PC-9 (cell line): ENCODE measurements at regions of chr22 and their contacts with region 1.

Region 1: DNA sequence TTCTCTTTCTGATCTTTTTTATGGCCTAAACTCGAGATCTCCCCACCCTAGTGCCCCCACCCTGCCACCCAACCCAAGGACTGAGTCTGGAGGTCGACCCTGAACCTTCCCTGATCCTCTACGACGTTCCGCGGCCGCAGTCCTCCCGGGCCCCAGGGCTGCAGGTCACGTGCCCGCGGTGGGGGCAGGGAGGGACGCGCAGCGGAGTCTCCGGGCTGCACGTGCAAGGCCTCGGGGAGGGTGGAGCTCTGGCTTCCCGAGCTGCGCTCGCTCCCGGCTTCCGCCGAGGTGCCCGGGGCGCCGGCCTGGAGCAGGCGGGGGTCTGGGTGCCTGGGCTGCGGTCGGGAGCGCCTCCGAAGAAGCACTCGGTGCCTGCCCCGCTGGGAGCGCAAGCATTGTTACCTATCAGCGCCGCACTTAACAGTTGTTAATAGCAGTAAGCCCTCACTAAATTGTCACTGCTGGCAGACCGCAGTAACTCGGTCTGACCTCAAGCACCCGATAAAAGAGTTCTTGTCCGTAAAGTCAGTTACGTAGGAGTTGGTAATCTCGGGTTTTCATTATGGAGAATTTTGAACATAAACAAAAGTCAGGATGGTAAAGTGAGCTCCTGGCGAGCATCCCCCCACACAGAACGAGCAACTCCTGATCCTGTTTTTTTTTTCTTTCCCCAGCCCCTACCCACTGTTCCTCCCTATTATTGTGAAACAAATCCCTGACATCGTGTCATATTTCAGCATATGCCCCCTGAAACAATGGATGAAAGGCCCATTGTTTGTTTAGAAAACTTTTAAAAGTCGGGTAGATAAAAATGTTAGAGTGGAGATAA is 69.7 kb upstream of the EP300 start:
- DNase-seq: peak; percentile 68 to 92
- H3K4me3 ChIP-seq: peak overlapping the region; percentile 69
- H3K27ac ChIP-seq: peak overlapping the region; percentile 95
- H3K4me1 ChIP-seq: peaks cover 15% of the 10 kb centered on the region
- H3K27me3 ChIP-seq: no peaks in the 10 kb centered on the region
- CTCF ChIP-seq: no peak

Region 2: GRCh38 chr22:40950962-40951794 is 71.5 kb before region 1 on chr22 and contains the start of gene RBX1:
- CTCF ChIA-PET with region 1: no interaction called
- POLR2A ChIA-PET with region 1: interaction called, 12 read pairs
- intact Hi-C with region 1: loop called (anchors 1 kb)
- DNase-seq: peak; percentile 91 to 98
- H3K4me3 ChIP-seq: peak within 1 kb of the TSS; percentile 83
- H3K27ac ChIP-seq: peak within 1 kb of the TSS; percentile 75
- H3K4me1 ChIP-seq: peaks cover 14% of the 10 kb centered on the region
- H3K27me3 ChIP-seq: no peaks in the 10 kb centered on the region
- CTCF ChIP-seq: no peak
- total RNA-seq, gene RBX1: 52.9 and 53.3 TPM in 2 replicates

Region 3: DNA sequence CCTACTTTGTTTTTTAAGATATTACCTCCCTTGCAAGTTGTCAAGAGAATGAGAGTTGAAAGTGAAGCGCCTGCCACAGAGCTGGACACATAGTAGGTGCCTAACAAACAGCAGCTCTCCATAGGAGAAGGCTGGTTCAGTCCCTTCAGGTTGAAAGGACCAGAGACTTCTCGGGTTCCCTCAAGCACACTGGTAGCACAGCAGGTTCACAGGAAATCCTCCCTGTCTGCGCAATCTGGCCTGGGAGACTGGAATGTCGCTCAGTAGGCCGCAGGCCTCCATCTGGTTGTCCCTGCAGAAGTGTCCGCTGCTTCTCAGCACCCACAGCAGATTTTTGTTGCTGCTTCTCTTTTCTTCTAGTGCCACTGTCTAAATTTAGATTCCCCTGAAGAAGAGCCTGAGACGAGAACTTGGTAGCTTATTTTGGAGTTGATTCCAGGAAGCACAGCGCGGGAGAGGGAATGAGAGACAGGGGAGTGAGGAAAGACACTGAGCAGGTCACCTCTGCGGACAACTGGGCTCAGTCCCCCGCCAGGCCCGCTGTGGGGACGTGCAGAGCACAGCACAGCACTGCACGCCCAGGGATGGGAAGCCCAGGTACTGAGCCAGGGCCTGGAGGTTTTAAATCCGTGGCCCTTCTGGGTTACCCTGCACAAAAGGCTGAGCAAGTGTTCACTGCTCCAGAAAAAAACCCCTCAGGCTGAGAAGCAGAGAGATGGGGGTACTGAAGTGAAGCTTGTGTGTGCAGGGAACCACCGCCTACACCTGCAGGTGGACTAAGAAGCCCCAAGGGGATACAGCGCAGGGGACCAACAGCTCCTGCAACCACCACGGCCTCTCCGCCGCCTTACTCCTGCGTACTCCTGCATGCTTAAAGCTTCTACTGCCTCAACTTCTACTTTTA is 40.0 kb before region 1 on chr22:
- CTCF ChIA-PET with region 1: no interaction called
- POLR2A ChIA-PET with region 1: interaction called, 10 read pairs
- intact Hi-C with region 1: no loop called
- DNase-seq: no peak
- H3K4me3 ChIP-seq: no peak overlapping the region
- H3K27ac ChIP-seq: no peak overlapping the region
- H3K4me1 ChIP-seq: no peaks in the 10 kb centered on the region
- H3K27me3 ChIP-seq: no peaks in the 10 kb centered on the region
- CTCF ChIP-seq: no peak

Region 4: GRCh38 chr22:41009202-41009943 is 13.3 kb before region 1 on chr22:
- CTCF ChIA-PET with region 1: no interaction called
- POLR2A ChIA-PET with region 1: interaction called, 16 read pairs
- intact Hi-C with region 1: no loop called
- DNase-seq: peak; percentile 51 to 77
- H3K4me3 ChIP-seq: no peak overlapping the region
- H3K27ac ChIP-seq: peak overlapping the region; percentile 44
- H3K4me1 ChIP-seq: peaks cover 18% of the 10 kb centered on the region
- H3K27me3 ChIP-seq: no peaks in the 10 kb centered on the region
- CTCF ChIP-seq: no peak